Thyroid gland (tissue), 4 donors: ENCODE measurements at regions of chr11 and their contacts with region 1.

Region 1: GRCh38 chr11:1303126-1303821 is 6.2 kb downstream of the TOLLIP start:
- DNase-seq: peak in 1 of 2 donors; percentile 45
- H3K4me3 ChIP-seq: no peak overlapping the region
- H3K27ac ChIP-seq: peak overlapping the region; percentile 12 to 58 (median 56)
- H3K4me1 ChIP-seq: peaks cover 50 to 73% of the 10 kb centered on the region in 2 donors
- H3K27me3 ChIP-seq: no peaks in the 10 kb centered on the region
- CTCF ChIP-seq: peak in 1 of 6 experiments; percentile 11
- POLR2A ChIP-seq: no peak

Region 2: GRCh38 chr11:1262172-1263006 is 40.9 kb before region 1 on chr11:
- intact Hi-C with region 1: loop called (anchors 5 kb)
- DNase-seq: peak; percentile 88 to 95
- H3K4me3 ChIP-seq: peak overlapping the region in 2 of 3 donors; percentile 31 to 38
- H3K27ac ChIP-seq: peak overlapping the region; percentile 26 to 50 (median 44)
- H3K4me1 ChIP-seq: peaks cover 13% of the 10 kb centered on the region in 2 donors
- H3K27me3 ChIP-seq: no peaks in the 10 kb centered on the region
- CTCF ChIP-seq: no peak
- POLR2A ChIP-seq: peak in 1 of 2 donors; percentile 56